ENCODE measurements at regions of chr5 and their contacts with region 1.

Region 1: DNA sequence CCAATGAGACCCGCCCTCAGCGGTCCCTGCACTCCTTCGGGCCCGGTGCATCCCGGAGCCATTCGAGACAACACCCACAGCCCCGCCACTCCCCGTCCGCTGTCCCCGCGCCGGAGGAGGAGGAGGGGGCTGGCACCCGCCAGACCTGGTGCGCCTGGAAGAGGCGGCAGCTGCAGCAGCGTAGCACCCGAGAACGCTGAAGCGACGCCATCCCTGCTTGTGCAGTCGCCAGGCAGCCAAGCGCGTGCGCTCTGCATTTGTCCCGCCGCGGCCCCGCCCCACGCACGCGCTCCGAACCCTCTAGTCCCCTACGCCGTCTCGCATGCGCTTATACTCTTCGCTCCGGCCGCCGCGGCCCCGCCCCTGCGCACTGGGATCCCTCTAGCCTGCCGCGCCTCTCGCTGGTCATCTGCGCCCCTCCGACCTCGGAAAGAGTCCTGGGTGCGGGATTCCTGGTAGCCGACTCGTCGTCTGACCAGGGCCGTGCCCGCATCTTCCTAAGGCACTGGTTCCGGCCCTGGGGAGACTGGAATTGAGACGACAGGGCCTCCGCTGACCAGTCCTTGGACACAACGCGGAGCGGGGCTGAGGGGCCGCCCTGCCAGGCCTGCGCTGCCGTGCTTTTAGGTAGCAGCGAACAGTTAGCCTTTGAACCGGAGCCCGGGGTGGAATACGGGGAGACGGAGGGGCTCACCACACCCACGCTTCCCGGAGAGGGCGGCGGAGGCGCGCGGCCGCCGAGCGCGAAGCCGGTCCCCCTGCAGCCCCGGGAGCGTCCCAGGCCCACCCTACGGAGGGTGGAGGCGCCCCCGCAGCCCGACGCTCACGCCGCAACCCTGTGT is at the start of gene MRNIP:
- DNase-seq: peak; percentile 66 to 94 (median 90)
- ATAC-seq: peak; percentile 95
- H3K4me3 ChIP-seq: peak within 1 kb of the TSS; percentile 94 to 98
- H3K4me3 Mint-ChIP-seq: peak within 1 kb of the TSS; percentile 96
- H3K27ac ChIP-seq: peak within 1 kb of the TSS; percentile 57 to 88
- H3K27ac Mint-ChIP-seq: peak within 1 kb of the TSS; percentile 92
- H3K4me1 ChIP-seq: peaks cover 8% of the 10 kb centered on the region
- H3K4me1 Mint-ChIP-seq: peaks cover 22% of the 10 kb centered on the region
- H3K27me3 ChIP-seq: no peaks in the 10 kb centered on the region
- H3K27me3 Mint-ChIP-seq: no peaks in the 10 kb centered on the region
- CTCF ChIP-seq: no peak
- total RNA-seq, gene MRNIP: 30.0 to 38.5 TPM

Region 2: DNA sequence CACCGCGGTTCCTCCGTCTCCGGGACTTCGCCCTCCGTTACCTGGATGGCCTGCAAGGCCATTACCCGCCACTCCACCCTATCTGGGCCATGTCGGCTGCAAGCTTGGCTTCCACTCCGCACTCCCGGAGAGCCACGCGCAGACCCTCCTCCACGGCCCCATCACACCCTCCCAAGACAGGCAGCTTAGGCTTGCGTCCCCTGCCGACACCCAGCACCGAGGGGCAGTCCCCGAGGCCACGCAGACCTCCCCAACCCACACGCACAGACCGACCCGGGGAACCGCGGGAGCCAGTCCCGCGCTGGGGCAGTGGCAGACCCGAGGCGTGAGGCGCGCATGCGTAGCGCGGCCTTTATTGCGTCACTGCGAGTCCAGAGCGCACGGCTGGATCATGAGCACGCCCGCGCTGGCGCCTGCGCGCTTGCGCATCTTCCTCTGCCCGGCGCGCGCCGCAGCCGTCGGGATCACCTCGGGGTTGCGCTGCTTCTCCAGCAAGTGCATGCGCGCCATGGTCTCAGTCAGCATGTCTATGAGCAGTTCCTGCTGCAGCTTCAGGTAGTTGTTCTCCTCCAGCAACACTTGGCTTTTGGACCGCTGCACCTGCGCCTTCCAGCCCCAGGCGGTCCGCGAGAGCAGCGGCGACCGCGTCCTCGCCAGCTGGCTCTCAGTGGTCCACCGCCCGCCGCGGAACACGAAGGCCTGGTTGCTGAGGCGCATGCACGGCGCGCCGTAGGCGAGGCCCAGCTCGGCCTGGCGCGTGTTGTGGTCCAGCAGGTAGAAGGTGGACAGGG is 180.4 kb before region 1 on chr5:
- CTCF ChIA-PET with region 1: no interaction called
- POLR2A ChIA-PET with region 1: no interaction called
- intact Hi-C with region 1: loop called in 1 of 2 experiments (anchors 5 kb)
- DNase-seq: peak; percentile 85 to 98 (median 92)
- ATAC-seq: peak; percentile 85
- H3K4me3 ChIP-seq: peak overlapping the region; percentile 66 to 98
- H3K4me3 Mint-ChIP-seq: peak overlapping the region; percentile 98
- H3K27ac ChIP-seq: peak overlapping the region; percentile 83 to 91
- H3K27ac Mint-ChIP-seq: peak overlapping the region; percentile 99
- H3K4me1 ChIP-seq: peaks cover 22% of the 10 kb centered on the region
- H3K4me1 Mint-ChIP-seq: peaks cover 37% of the 10 kb centered on the region
- H3K27me3 ChIP-seq: no peaks in the 10 kb centered on the region
- H3K27me3 Mint-ChIP-seq: no peaks in the 10 kb centered on the region
- CTCF ChIP-seq: no peak

Region 3: GRCh38 chr5:179806250-179807222 is 52.3 kb before region 1 on chr5 and contains the start of gene MGAT4B:
- CTCF ChIA-PET with region 1: interaction called, 7 read pairs
- POLR2A ChIA-PET with region 1: interaction called, 6 read pairs
- intact Hi-C with region 1: loop called (anchors 1 to 2 kb)
- DNase-seq: peak; percentile 30 to 80 (median 58)
- ATAC-seq: peak; percentile 74
- H3K4me3 ChIP-seq: peak within 1 kb of the TSS; percentile 52 to 67
- H3K4me3 Mint-ChIP-seq: peak within 1 kb of the TSS; percentile 79
- H3K27ac ChIP-seq: peak within 1 kb of the TSS; percentile 51 to 60
- H3K27ac Mint-ChIP-seq: peak within 1 kb of the TSS; percentile 79
- H3K4me1 ChIP-seq: peaks cover 33% of the 10 kb centered on the region
- H3K4me1 Mint-ChIP-seq: peaks cover 29% of the 10 kb centered on the region
- H3K27me3 ChIP-seq: no peaks in the 10 kb centered on the region
- H3K27me3 Mint-ChIP-seq: no peaks in the 10 kb centered on the region
- CTCF ChIP-seq: no peak
- total RNA-seq, gene MGAT4B: 113 to 126 TPM

Region 4: DNA sequence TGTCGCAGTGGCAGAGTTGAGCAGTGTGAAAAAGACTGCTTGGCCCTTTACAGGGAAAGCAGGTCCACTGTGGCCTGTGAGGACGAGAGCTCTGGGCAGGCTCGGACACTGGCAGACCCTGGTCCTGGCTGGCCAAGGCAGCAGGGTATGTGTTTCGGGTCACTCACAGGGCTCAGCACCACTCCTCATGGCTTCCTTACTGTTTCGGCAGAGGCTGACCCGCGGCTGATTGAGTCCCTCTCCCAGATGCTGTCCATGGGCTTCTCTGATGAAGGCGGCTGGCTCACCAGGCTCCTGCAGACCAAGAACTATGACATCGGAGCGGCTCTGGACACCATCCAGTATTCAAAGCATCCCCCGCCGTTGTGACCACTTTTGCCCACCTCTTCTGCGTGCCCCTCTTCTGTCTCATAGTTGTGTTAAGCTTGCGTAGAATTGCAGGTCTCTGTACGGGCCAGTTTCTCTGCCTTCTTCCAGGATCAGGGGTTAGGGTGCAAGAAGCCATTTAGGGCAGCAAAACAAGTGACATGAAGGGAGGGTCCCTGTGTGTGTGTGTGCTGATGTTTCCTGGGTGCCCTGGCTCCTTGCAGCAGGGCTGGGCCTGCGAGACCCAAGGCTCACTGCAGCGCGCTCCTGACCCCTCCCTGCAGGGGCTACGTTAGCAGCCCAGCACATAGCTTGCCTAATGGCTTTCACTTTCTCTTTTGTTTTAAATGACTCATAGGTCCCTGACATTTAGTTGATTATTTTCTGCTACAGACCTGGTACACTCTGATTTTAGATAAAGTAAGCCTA is 22.4 kb before region 1 on chr5:
- CTCF ChIA-PET with region 1: interaction called, 3 read pairs
- POLR2A ChIA-PET with region 1: interaction called, 3 read pairs
- intact Hi-C with region 1: loop called (anchors 1 kb)
- DNase-seq: peak in 8 of 9 experiments; percentile 33 to 83 (median 60)
- ATAC-seq: peak; percentile 93
- H3K4me3 ChIP-seq: no peak overlapping the region
- H3K4me3 Mint-ChIP-seq: peak overlapping the region; percentile 23
- H3K27ac ChIP-seq: peak overlapping the region; percentile 34 to 70
- H3K27ac Mint-ChIP-seq: peak overlapping the region; percentile 87
- H3K4me1 ChIP-seq: peaks cover 15% of the 10 kb centered on the region
- H3K4me1 Mint-ChIP-seq: peaks cover 17% of the 10 kb centered on the region
- H3K27me3 ChIP-seq: no peaks in the 10 kb centered on the region
- H3K27me3 Mint-ChIP-seq: no peaks in the 10 kb centered on the region
- CTCF ChIP-seq: no peak

Region 5: GRCh38 chr5:180079702-180080466 is 221.1 kb after region 1 on chr5:
- CTCF ChIA-PET with region 1: no interaction called
- POLR2A ChIA-PET with region 1: no interaction called
- intact Hi-C with region 1: no loop called
- DNase-seq: no peak
- ATAC-seq: peak; percentile 35
- H3K4me3 ChIP-seq: peak overlapping the region in 1 of 2 experiments; percentile 2
- H3K4me3 Mint-ChIP-seq: peak overlapping the region; percentile 82
- H3K27ac ChIP-seq: no peak overlapping the region
- H3K27ac Mint-ChIP-seq: no peak overlapping the region
- H3K4me1 ChIP-seq: peaks cover 5% of the 10 kb centered on the region
- H3K4me1 Mint-ChIP-seq: peaks cover 7% of the 10 kb centered on the region
- H3K27me3 ChIP-seq: peaks cover 0 to 10% of the 10 kb centered on the region in 2 experiments
- H3K27me3 Mint-ChIP-seq: peaks cover 52% of the 10 kb centered on the region
- CTCF ChIP-seq: no peak

Region 6: DNA sequence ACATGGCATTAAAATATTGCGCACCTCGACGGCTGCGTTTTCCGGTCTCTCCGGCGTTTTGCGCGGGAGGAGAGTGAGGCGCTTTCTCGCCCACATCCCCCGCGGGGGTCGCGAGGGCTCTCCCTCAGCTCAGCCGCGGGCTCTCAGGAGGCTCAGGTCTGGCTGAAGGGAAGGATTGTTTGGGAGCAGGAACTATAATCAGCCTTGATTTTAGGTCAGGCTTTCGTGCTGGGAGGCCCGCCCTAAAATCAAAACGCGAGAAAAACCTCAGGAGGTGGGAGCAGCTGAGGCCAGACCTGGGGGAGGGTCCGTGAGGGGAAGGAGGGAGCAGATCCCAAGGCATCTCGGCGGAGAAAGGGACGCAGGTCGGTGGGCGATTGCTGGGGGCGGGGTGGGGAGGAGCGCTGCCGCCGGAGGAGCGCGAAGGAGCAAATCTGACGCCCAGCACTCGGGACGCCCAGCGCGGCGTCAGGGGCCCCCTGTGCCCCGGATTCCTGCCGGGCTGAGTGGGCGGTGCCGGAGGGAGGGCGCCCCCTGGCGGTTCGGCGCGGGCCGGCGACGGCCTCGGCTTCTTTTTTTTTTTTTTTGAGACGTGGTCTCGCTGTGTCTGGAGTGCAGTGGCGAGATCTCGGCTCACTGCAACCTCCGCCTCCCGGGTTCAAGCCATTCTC is 231.4 kb after region 1 on chr5:
- CTCF ChIA-PET with region 1: no interaction called
- POLR2A ChIA-PET with region 1: no interaction called
- intact Hi-C with region 1: loop called in 1 of 2 experiments (anchors 1 kb)
- DNase-seq: peak; percentile 62 to 90 (median 81)
- ATAC-seq: peak; percentile 71
- H3K4me3 ChIP-seq: peak overlapping the region; percentile 57
- H3K4me3 Mint-ChIP-seq: peak overlapping the region; percentile 86
- H3K27ac ChIP-seq: peak overlapping the region in 1 of 2 experiments; percentile 42
- H3K27ac Mint-ChIP-seq: peak overlapping the region; percentile 88
- H3K4me1 ChIP-seq: peaks cover 16% of the 10 kb centered on the region
- H3K4me1 Mint-ChIP-seq: peaks cover 27% of the 10 kb centered on the region
- H3K27me3 ChIP-seq: no peaks in the 10 kb centered on the region
- H3K27me3 Mint-ChIP-seq: peaks cover 4% of the 10 kb centered on the region
- CTCF ChIP-seq: peak; percentile 68